Endothelial cell of umbilical vein (primary cell): ENCODE measurements at regions of chr1 and their contacts with region 1.

Region 1: GRCh38 chr1:94218332-94218731 is 19.1 kb downstream of the ARHGAP29 start:
- DNase-seq: peak; percentile 81
- H3K4me3 ChIP-seq: peak overlapping the region in 1 of 3 experiments; percentile 8
- H3K27ac ChIP-seq: peak overlapping the region; percentile 48
- H3K4me1 ChIP-seq: peaks cover 62% of the 10 kb centered on the region
- H3K27me3 ChIP-seq: no peaks in the 10 kb centered on the region
- CTCF ChIP-seq: no peak
- POLR2A ChIP-seq: no peak

Region 2: GRCh38 chr1:93851327-93851712 is 367.0 kb before region 1 on chr1:
- CTCF ChIA-PET with region 1: no interaction called
- POLR2A ChIA-PET with region 1: no interaction called
- dilution Hi-C with region 1: no loop called
- intact Hi-C with region 1: no loop called
- DNase-seq: no peak
- H3K4me3 ChIP-seq: no peak overlapping the region
- H3K27ac ChIP-seq: no peak overlapping the region
- H3K4me1 ChIP-seq: peaks cover 8% of the 10 kb centered on the region
- H3K27me3 ChIP-seq: peaks cover 0 to 7% of the 10 kb centered on the region in 2 experiments
- CTCF ChIP-seq: no peak
- POLR2A ChIP-seq: no peak

Region 3: GRCh38 chr1:93888896-93889295 is 329.4 kb before region 1 on chr1:
- CTCF ChIA-PET with region 1: no interaction called
- POLR2A ChIA-PET with region 1: no interaction called
- dilution Hi-C with region 1: no loop called
- intact Hi-C with region 1: no loop called
- DNase-seq: no peak
- H3K4me3 ChIP-seq: no peak overlapping the region
- H3K27ac ChIP-seq: no peak overlapping the region
- H3K4me1 ChIP-seq: peaks cover 13% of the 10 kb centered on the region
- H3K27me3 ChIP-seq: no peaks in the 10 kb centered on the region
- CTCF ChIP-seq: no peak
- POLR2A ChIP-seq: no peak

Region 4: GRCh38 chr1:94237291-94238226 is 19.2 kb after region 1 on chr1 and contains the start of gene ARHGAP29:
- CTCF ChIA-PET with region 1: interaction called, 8 read pairs
- POLR2A ChIA-PET with region 1: interaction called, 7 read pairs
- dilution Hi-C with region 1: no loop called
- intact Hi-C with region 1: loop called (anchors 2 kb)
- DNase-seq: peak; percentile 86
- H3K4me3 ChIP-seq: peak within 1 kb of the TSS; percentile 88 to 100 (median 95)
- H3K27ac ChIP-seq: peak within 1 kb of the TSS; percentile 93
- H3K4me1 ChIP-seq: peaks cover 67% of the 10 kb centered on the region
- H3K27me3 ChIP-seq: no peaks in the 10 kb centered on the region
- CTCF ChIP-seq: no peak
- POLR2A ChIP-seq: peak; percentile 83
- total RNA-seq, gene ARHGAP29: 199 and 215 TPM in 2 replicates